H1 (cell line): ENCODE measurements at regions of chr5 and their contacts with region 1.

Region 1: GRCh38 chr5:157994906-157995519 is 136.1 kb upstream of the CLINT1 start:
- DNase-seq: peak; percentile 73 to 85
- H3K4me3 ChIP-seq: no peak overlapping the region
- H3K27ac ChIP-seq: no peak overlapping the region
- H3K4me1 ChIP-seq: peaks cover 0 to 2% (median 0%) of the 10 kb centered on the region in 4 experiments; a peak in 1 of 7 replicates
- H3K27me3 ChIP-seq: no peaks in the 10 kb centered on the region
- CTCF ChIP-seq: peak; percentile 83 to 91 (median 91)
- EP300 ChIP-seq: no peak
- POLR2A ChIP-seq: no peak
- RAD21 ChIP-seq: peak; percentile 95 to 97

Region 2: GRCh38 chr5:157575381-157576020 is 419.5 kb before region 1 on chr5 and contains the start of gene ADAM19:
- CTCF ChIA-PET with region 1: no interaction called
- POLR2A ChIA-PET with region 1: no interaction called
- DNase-seq: peak; percentile 47 to 84
- H3K4me3 ChIP-seq: peak within 1 kb of the TSS; percentile 56 to 78 (median 75)
- H3K27ac ChIP-seq: no peak within 1 kb of the TSS
- H3K4me1 ChIP-seq: peaks cover 2 to 5% (median 3%) of the 10 kb centered on the region in 4 experiments; a peak in 4 of 7 replicates
- H3K27me3 ChIP-seq: peaks cover 0 to 12% (median 7%) of the 10 kb centered on the region in 4 experiments; a peak in 5 of 7 replicates
- CTCF ChIP-seq: no peak
- EP300 ChIP-seq: no peak
- POLR2A ChIP-seq: no peak
- RAD21 ChIP-seq: no peak; a peak in 1 of 4 replicates
- total RNA-seq, gene ADAM19: 21.4 and 22.7 TPM in 2 replicates

Region 3: DNA sequence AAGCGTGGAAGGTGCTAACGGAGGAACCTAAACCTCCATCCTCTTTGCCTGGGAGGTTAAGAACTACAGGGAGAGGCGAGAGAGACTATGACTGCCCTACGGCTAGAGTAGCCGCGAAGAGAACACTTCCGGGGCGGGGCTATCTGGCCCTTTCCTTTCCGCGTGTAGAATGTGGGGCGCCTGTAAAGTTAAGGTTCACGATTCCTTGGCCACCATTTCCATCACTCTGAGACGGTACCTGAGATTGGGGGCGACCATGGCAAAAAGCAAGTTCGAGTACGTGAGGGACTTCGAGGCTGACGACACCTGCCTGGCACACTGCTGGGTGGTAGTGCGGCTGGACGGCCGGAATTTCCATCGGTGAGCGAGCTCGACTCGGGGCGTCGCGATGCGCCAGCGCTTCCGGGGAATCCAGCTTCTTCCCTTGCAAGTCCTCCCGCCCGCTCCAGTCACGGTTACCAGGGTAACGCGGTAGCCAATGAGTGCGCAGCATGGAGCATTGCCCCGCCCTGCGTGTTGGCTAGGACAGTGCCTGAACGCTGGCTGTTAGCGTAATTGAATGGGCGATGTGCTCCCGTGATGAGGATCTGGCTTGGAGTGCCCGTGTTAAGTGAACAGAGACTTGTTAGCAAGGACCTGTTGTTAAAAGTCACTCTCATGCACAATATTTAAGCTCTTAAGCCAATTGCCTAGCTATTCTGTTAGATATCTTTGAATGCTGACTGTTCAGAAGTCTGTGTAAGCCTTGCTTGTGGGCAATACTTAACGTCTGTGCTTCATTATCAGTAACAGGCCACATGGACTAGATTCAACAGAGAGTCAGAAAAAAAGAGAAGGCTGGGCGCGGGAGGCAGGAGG is 263.5 kb before region 1 on chr5 and contains the start of gene THG1L:
- CTCF ChIA-PET with region 1: no interaction called
- POLR2A ChIA-PET with region 1: no interaction called
- DNase-seq: peak; percentile 94 to 100
- H3K4me3 ChIP-seq: peak within 1 kb of the TSS; percentile 79 to 98 (median 90)
- H3K27ac ChIP-seq: peak within 1 kb of the TSS; percentile 96
- H3K4me1 ChIP-seq: no peaks in the 10 kb centered on the region
- H3K27me3 ChIP-seq: no peaks in the 10 kb centered on the region
- CTCF ChIP-seq: no peak
- EP300 ChIP-seq: no peak
- POLR2A ChIP-seq: peak; percentile 93 to 97
- RAD21 ChIP-seq: no peak
- total RNA-seq, gene THG1L: 12.4 and 13.0 TPM in 2 replicates

Region 4: GRCh38 chr5:157761690-157762621 is 233.1 kb before region 1 on chr5:
- CTCF ChIA-PET with region 1: interaction called, 24 read pairs
- POLR2A ChIA-PET with region 1: no interaction called
- DNase-seq: no peak
- H3K4me3 ChIP-seq: no peak overlapping the region
- H3K27ac ChIP-seq: no peak overlapping the region
- H3K4me1 ChIP-seq: no peaks in the 10 kb centered on the region
- H3K27me3 ChIP-seq: no peaks in the 10 kb centered on the region
- CTCF ChIP-seq: peak in 2 of 3 experiments; percentile 67 to 76; a peak in 3 of 4 replicates
- EP300 ChIP-seq: no peak
- POLR2A ChIP-seq: no peak
- RAD21 ChIP-seq: peak; percentile 84 to 88

Region 5: GRCh38 chr5:157858527-157859226 is 136.3 kb before region 1 on chr5 and contains the start of gene CLINT1:
- CTCF ChIA-PET with region 1: interaction called, 34 read pairs
- POLR2A ChIA-PET with region 1: interaction called, 3 read pairs
- DNase-seq: peak; percentile 65 to 92
- H3K4me3 ChIP-seq: peak within 1 kb of the TSS; percentile 60 to 90 (median 84)
- H3K27ac ChIP-seq: peak within 1 kb of the TSS; percentile 81
- H3K4me1 ChIP-seq: peaks cover 0 to 7% (median 4%) of the 10 kb centered on the region in 4 experiments; a peak in 3 of 7 replicates
- H3K27me3 ChIP-seq: no peaks in the 10 kb centered on the region
- CTCF ChIP-seq: no peak
- EP300 ChIP-seq: peak in 1 of 2 experiments; percentile 34; a peak in 1 of 3 replicates
- POLR2A ChIP-seq: peak; percentile 40 to 82
- RAD21 ChIP-seq: no peak; a peak in 1 of 4 replicates
- total RNA-seq, gene CLINT1: 84.7 and 85.9 TPM in 2 replicates

Region 6: DNA sequence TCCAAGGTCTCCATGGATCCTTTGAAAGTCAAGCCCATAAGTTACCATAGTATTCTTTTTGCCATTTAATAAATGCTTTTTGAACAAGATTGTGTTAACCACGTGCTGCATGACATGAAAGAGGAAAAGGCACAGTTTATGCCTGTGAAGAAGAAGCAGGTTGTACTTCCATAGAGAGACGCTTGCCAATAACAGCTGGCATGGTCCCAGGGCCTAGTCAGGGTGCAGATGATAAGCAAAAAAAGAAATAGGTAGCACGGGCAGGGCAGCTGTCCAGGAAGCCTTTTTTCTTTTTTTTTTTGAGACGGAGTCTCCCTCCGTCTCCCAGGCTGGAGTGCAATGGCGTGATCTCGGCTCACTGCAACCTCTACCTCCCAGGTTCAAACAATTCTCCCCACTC is 64.3 kb before region 1 on chr5:
- CTCF ChIA-PET with region 1: interaction called, 14 read pairs
- POLR2A ChIA-PET with region 1: no interaction called
- DNase-seq: no peak
- H3K4me3 ChIP-seq: no peak overlapping the region
- H3K27ac ChIP-seq: no peak overlapping the region
- H3K4me1 ChIP-seq: peaks cover 2 to 10% (median 7%) of the 10 kb centered on the region in 4 experiments; a peak in 5 of 7 replicates
- H3K27me3 ChIP-seq: no peaks in the 10 kb centered on the region
- CTCF ChIP-seq: no peak
- EP300 ChIP-seq: no peak
- POLR2A ChIP-seq: no peak
- RAD21 ChIP-seq: no peak

Region 7: GRCh38 chr5:157961828-157962590 is 33.0 kb before region 1 on chr5:
- CTCF ChIA-PET with region 1: interaction called, 21 read pairs
- POLR2A ChIA-PET with region 1: no interaction called
- DNase-seq: no peak
- H3K4me3 ChIP-seq: no peak overlapping the region
- H3K27ac ChIP-seq: no peak overlapping the region
- H3K4me1 ChIP-seq: peaks cover 0 to 20% (median 7%) of the 10 kb centered on the region in 4 experiments; a peak in 6 of 7 replicates
- H3K27me3 ChIP-seq: no peaks in the 10 kb centered on the region
- CTCF ChIP-seq: no peak
- EP300 ChIP-seq: no peak
- POLR2A ChIP-seq: no peak
- RAD21 ChIP-seq: no peak

Region 8: GRCh38 chr5:158007336-158007735 is 12.3 kb after region 1 on chr5:
- CTCF ChIA-PET with region 1: interaction called, 17 read pairs
- POLR2A ChIA-PET with region 1: no interaction called
- DNase-seq: no peak
- H3K4me3 ChIP-seq: no peak overlapping the region
- H3K27ac ChIP-seq: no peak overlapping the region
- H3K4me1 ChIP-seq: peaks cover 0 to 5% (median 2%) of the 10 kb centered on the region in 4 experiments; a peak in 2 of 7 replicates
- H3K27me3 ChIP-seq: no peaks in the 10 kb centered on the region
- CTCF ChIP-seq: no peak
- EP300 ChIP-seq: no peak
- POLR2A ChIP-seq: no peak
- RAD21 ChIP-seq: no peak

Region 9: DNA sequence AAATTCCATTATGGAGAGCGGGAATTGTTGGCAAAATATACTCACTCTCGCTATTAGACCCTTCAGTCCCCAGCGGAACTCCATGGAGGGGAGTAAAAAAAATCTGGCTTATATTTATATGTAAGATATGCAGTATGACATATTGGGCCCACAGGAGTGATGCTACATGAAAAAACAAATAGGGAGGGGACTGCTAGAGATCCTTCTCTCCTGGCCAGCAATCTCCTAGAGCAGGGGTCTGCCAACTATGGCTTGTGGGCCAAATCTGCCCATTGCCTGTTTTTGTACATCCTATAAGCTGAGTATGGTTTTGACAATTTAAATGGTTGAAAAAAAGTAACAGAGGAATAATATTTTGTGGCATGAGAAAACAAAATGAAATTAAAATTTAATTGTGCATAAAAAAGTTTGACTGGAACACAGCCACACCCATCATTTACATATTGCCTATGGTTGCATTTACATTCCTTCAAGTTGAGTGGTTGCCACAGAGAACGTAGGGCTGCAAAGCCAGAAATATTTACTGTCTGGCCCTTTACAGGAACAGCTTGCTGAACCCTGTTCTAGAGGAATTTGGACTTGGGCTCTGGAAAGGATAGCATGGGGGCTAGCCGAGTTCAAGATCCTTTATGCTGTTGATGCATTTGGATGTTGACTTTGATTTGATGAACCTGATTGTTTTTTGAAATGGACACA is 61.3 kb after region 1 on chr5:
- CTCF ChIA-PET with region 1: no interaction called
- POLR2A ChIA-PET with region 1: no interaction called
- DNase-seq: no peak
- H3K4me3 ChIP-seq: no peak overlapping the region
- H3K27ac ChIP-seq: no peak overlapping the region
- H3K4me1 ChIP-seq: no peaks in the 10 kb centered on the region
- H3K27me3 ChIP-seq: no peaks in the 10 kb centered on the region
- CTCF ChIP-seq: no peak
- EP300 ChIP-seq: no peak
- POLR2A ChIP-seq: no peak
- RAD21 ChIP-seq: no peak